Naive thymus-derived CD4-positive, alpha-beta T cell (primary cell): ENCODE measurements at regions of chr12 and their contacts with region 1.

Region 1: GRCh38 chr12:109093022-109093918 is at the start of gene ALKBH2:
- DNase-seq: peak; percentile 91 to 96 (median 93)
- ATAC-seq: peak; percentile 87
- H3K4me3 ChIP-seq: peak within 1 kb of the TSS; percentile 62
- H3K4me3 Mint-ChIP-seq: peak within 1 kb of the TSS; percentile 80 to 93 (median 90)
- H3K27ac ChIP-seq: peak within 1 kb of the TSS; percentile 76
- H3K27ac Mint-ChIP-seq: peak within 1 kb of the TSS; percentile 88 to 96 (median 93)
- H3K4me1 ChIP-seq: peaks cover 18% of the 10 kb centered on the region in 2 donors
- H3K4me1 Mint-ChIP-seq: peaks cover 23 to 43% (median 36%) of the 10 kb centered on the region in 7 donors
- H3K27me3 ChIP-seq: no peaks in the 10 kb centered on the region
- H3K27me3 Mint-ChIP-seq: no peaks in the 10 kb centered on the region
- total RNA-seq, gene ALKBH2: 13.2 to 21.4 (median 17.6) TPM

Region 2: DNA sequence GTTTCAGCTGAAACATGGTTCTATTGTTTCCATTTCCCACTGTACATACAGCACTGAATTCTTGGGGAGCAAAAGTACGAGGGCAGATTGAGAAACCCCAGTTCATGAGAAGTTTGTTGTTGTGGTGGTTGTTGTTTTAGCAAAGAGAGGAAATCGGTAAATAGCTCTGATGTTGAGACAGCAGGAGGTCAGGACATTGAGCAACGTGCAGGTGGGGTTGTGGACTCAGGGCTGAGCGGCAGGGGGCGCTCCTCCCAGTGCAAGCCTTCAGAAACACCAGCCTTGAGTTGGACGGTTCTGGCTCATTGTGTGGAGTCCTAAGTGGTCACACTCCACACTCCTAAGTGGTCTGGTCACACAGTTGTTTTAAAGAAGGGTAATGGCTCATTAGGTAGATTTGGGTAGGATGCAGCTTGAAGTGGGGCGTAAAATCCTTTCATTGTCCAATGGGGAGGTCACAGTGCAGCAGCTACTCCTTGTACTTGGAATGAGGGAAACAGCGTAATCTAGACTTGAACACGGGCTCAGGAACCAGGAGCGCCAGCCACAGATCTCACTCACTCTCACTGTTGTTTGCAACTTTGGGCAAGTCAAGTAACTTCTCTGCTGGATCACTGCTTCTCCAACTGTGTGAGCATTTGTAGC is 1422.1 kb before region 1 on chr12:
- CTCF ChIA-PET with region 1: no interaction called
- POLR2A ChIA-PET with region 1: interaction called, 3 read pairs
- intact Hi-C with region 1: loop called in 1 of 2 experiments (anchors 1 kb)
- DNase-seq: peak in 2 of 9 donors; percentile 14 to 44
- ATAC-seq: peak; percentile 67
- H3K4me3 ChIP-seq: no peak overlapping the region
- H3K4me3 Mint-ChIP-seq: no peak overlapping the region
- H3K27ac ChIP-seq: no peak overlapping the region
- H3K27ac Mint-ChIP-seq: peak overlapping the region in 1 of 9 donors; percentile 69
- H3K4me1 ChIP-seq: no peaks in the 10 kb centered on the region
- H3K4me1 Mint-ChIP-seq: peaks cover 0 to 7% (median 5%) of the 10 kb centered on the region in 7 donors
- H3K27me3 ChIP-seq: no peaks in the 10 kb centered on the region
- H3K27me3 Mint-ChIP-seq: peaks cover 7 to 25% (median 21%) of the 10 kb centered on the region in 5 donors

Region 3: GRCh38 chr12:108514973-108515814 is 578.1 kb before region 1 on chr12 and contains the start of gene FICD:
- CTCF ChIA-PET with region 1: no interaction called
- POLR2A ChIA-PET with region 1: no interaction called
- intact Hi-C with region 1: loop called (anchors 1 to 2 kb)
- DNase-seq: peak; percentile 93 to 99 (median 98)
- ATAC-seq: peak; percentile 96
- H3K4me3 ChIP-seq: peak within 1 kb of the TSS; percentile 81
- H3K4me3 Mint-ChIP-seq: peak within 1 kb of the TSS; percentile 91 to 97 (median 94)
- H3K27ac ChIP-seq: peak within 1 kb of the TSS; percentile 78
- H3K27ac Mint-ChIP-seq: peak within 1 kb of the TSS; percentile 89 to 95 (median 94)
- H3K4me1 ChIP-seq: peaks cover 8% of the 10 kb centered on the region in 2 donors
- H3K4me1 Mint-ChIP-seq: peaks cover 17 to 40% (median 22%) of the 10 kb centered on the region in 7 donors
- H3K27me3 ChIP-seq: no peaks in the 10 kb centered on the region
- H3K27me3 Mint-ChIP-seq: peaks cover 0 to 2% (median 0%) of the 10 kb centered on the region in 5 donors
- total RNA-seq, gene FICD: 2.8 to 9.7 (median 6.9) TPM

Region 4: DNA sequence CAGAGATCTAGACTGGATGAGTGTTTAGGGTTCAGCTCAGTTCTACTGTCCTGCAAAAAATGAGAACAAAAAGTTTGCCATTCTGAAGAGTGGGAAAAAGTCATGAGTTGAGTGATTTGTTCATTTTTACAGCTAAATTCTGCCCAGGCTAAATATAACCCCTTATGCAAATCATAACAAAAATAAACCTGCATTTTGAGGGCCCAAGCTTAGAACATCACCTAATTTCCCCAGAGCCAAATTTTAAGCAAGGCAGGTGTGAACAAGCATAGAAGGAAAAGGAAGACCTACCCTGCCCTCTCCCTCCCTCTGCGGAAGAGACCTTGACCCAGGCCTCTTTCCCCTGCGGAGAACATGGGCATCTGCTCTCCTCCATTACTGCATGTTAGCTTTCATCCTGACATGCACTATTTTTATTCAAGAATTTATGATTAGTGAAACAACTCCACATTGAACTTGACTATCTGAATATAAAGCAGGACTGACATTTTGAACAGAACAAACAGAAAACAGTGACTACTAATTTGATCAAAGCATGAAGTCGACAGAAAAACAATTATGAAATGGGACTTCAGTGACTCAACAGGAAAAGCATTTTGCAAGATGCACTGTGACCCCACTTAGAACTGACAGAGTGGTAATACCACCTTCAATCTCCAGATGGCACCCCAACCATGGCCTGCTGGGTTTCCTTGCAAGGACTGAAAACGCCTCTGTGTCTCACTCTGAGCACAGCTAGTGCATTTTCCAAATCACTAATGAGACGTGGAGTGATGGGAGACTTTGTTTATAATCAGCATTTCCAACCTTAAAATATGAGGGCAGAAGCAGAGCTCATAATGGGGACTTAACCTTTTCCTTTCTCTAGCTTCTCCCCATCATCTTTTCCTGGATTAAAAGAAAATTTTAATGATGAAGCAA is 428.7 kb before region 1 on chr12:
- CTCF ChIA-PET with region 1: interaction called, 5 read pairs
- POLR2A ChIA-PET with region 1: no interaction called
- intact Hi-C with region 1: loop called (anchors 1 kb)
- DNase-seq: peak; percentile 35 to 83 (median 78)
- ATAC-seq: peak; percentile 97
- H3K4me3 ChIP-seq: no peak overlapping the region
- H3K4me3 Mint-ChIP-seq: peak overlapping the region in 1 of 10 donors; percentile 24
- H3K27ac ChIP-seq: no peak overlapping the region
- H3K27ac Mint-ChIP-seq: peak overlapping the region in 8 of 9 donors; percentile 8 to 84 (median 75)
- H3K4me1 ChIP-seq: peaks cover 0 to 3% of the 10 kb centered on the region in 2 donors
- H3K4me1 Mint-ChIP-seq: peaks cover 5 to 17% (median 12%) of the 10 kb centered on the region in 7 donors
- H3K27me3 ChIP-seq: no peaks in the 10 kb centered on the region
- H3K27me3 Mint-ChIP-seq: no peaks in the 10 kb centered on the region

Region 5: DNA sequence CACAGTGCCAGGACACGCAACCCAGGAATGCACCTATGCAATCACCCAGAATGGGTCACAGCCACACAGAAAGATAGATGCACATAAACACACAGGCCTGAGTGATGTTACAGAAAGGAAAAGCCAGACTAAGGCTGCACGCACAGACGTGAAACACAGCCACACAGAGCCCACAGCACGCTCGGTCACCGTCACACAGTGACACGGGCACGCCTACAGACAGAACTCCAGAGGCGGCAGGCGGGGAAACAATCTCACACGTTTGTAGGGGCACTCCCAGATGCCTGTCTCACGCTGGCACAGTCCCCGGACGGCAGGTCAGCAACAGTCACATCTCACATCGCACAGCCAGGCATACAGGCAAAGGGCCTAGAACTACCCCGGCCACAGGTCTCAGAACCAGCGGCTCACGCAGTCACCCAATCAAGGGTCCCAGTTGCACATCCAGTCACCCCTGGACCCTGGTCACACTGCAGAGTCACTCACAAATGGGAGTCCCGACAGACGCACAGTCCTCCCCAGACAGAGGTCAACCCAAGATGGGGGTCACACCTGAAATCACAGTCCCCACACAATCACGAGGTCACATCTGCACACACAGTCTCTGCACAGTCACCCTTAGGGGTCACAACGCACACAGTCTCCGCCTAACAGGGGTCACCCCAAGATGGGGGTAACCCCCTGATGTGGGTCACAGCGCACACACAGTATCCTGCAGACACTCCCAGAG is 236.7 kb before region 1 on chr12:
- CTCF ChIA-PET with region 1: no interaction called
- POLR2A ChIA-PET with region 1: interaction called, 3 read pairs
- intact Hi-C with region 1: loop called (anchors 1 to 10 kb)
- DNase-seq: peak; percentile 35 to 77 (median 54)
- ATAC-seq: peak; percentile 68
- H3K4me3 ChIP-seq: peak overlapping the region; percentile 84
- H3K4me3 Mint-ChIP-seq: peak overlapping the region; percentile 89 to 97 (median 94)
- H3K27ac ChIP-seq: peak overlapping the region; percentile 62
- H3K27ac Mint-ChIP-seq: peak overlapping the region; percentile 76 to 99 (median 92)
- H3K4me1 ChIP-seq: peaks cover 18 to 23% of the 10 kb centered on the region in 2 donors
- H3K4me1 Mint-ChIP-seq: peaks cover 26 to 56% (median 47%) of the 10 kb centered on the region in 7 donors
- H3K27me3 ChIP-seq: no peaks in the 10 kb centered on the region
- H3K27me3 Mint-ChIP-seq: peaks cover 0 to 2% (median 0%) of the 10 kb centered on the region in 5 donors

Region 6: DNA sequence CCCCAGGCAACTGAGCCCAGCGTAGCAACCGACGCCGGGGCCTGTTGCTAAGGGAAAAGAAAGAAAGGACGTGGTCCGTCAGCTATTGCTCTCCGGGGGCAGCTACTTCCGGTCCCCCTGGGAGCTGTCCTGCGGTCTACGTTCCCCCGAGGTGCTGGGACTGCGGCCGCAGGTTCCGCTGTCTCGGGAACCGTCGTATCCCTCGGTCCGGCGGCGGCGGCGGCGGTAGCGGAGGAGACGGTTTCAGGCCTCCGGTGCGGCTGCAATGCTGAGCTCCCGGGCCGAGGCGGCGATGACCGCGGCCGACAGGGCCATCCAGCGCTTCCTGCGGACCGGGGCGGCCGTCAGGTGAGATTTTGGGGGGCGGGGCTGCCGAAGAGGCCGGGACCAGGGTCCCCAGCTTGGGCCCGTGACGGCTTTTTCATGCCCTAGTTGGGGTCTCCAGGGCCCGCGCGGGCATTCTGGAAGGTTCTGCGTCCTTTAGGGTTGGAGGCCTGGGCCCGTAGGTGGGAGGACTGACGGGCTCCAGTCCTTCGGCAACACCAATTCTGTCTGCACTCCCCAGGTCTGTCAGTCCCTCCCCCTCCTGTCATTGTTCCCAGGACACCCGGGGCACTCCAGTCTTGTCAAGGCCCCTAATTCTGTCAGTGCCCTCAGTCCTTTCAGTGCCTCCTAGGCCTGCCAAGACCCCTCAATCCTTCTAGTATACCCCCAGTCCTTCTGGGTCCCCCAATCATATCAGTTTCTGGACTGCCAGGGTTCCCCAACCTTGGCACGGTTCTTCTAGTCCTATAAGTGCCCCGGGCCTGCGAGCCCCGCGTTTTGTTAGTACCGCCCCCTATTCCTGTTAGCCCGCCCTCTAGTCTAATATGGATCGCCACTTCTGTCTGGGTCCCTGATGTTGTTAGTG is 40.6 kb before region 1 on chr12 and contains the start of gene USP30:
- CTCF ChIA-PET with region 1: interaction called, 4 read pairs
- POLR2A ChIA-PET with region 1: interaction called, 5 read pairs
- intact Hi-C with region 1: loop called (anchors 1 kb)
- DNase-seq: peak; percentile 68 to 86 (median 77)
- ATAC-seq: peak; percentile 93
- H3K4me3 ChIP-seq: peak within 1 kb of the TSS; percentile 91
- H3K4me3 Mint-ChIP-seq: peak within 1 kb of the TSS; percentile 86 to 99 (median 96)
- H3K27ac ChIP-seq: peak within 1 kb of the TSS; percentile 89
- H3K27ac Mint-ChIP-seq: peak within 1 kb of the TSS; percentile 89 to 98 (median 95)
- H3K4me1 ChIP-seq: peaks cover 13% of the 10 kb centered on the region in 2 donors
- H3K4me1 Mint-ChIP-seq: peaks cover 14 to 27% (median 17%) of the 10 kb centered on the region in 7 donors
- H3K27me3 ChIP-seq: no peaks in the 10 kb centered on the region
- H3K27me3 Mint-ChIP-seq: no peaks in the 10 kb centered on the region
- total RNA-seq, gene USP30: 7.8 to 15.7 (median 12.9) TPM

Region 7: DNA sequence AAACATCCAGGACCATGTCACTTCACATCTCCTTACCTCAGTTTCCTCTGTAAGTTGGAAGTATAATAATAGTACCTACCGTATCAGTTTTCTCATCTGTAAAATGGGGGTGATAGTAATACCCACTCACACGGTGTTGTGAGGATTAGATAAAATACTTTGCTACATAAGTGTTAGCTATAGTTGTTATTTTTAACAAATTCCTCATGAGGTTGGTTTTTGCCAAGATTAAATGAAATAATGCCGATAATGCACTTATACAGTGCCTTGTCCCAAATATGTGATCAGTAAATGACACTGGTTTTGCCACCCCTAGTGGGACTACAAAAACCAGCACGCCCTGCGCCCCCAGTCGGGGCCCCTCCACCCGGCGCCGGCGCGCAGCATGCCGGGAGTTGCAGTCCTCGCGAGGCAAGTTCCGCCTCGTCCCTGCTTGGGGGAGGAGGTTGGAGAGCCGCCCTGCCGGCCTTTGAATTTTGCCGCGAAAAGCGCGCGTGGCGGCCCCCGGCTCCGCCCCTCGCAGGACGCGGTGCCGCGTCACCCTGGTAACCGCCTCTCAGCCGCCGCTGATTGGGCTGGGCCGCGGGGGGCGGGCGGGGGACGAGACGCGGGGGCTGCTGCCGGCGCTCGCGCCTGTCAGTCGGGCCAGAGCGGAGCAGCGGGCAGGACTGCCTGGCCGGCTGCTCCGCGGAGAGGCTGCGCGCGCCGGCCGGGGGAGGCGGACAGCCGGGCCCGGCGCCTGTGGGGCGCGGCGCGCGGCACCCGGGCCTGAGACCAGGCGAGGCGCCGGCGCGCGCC is 620.1 kb after region 1 on chr12 and contains the start of gene FAM222A:
- CTCF ChIA-PET with region 1: no interaction called
- POLR2A ChIA-PET with region 1: no interaction called
- intact Hi-C with region 1: loop called in 1 of 2 experiments (anchors 1 kb)
- DNase-seq: peak; percentile 94 to 99 (median 98)
- ATAC-seq: peak; percentile 94
- H3K4me3 ChIP-seq: peak within 1 kb of the TSS; percentile 41
- H3K4me3 Mint-ChIP-seq: peak within 1 kb of the TSS; percentile 57 to 81 (median 72)
- H3K27ac ChIP-seq: peak within 1 kb of the TSS; percentile 55
- H3K27ac Mint-ChIP-seq: peak within 1 kb of the TSS in 1 of 9 donors; percentile 48
- H3K4me1 ChIP-seq: peaks cover 3 to 11% of the 10 kb centered on the region in 2 donors
- H3K4me1 Mint-ChIP-seq: peaks cover 0 to 4% (median 0%) of the 10 kb centered on the region in 7 donors
- H3K27me3 ChIP-seq: peaks cover 0 to 6% of the 10 kb centered on the region in 2 donors
- H3K27me3 Mint-ChIP-seq: peaks cover 29 to 65% (median 30%) of the 10 kb centered on the region in 5 donors
- total RNA-seq, gene FAM222A: 0.24 to 1.6 (median 0.80) TPM